ENCODE measurements at regions of chr10 and their contacts with region 1.

Region 1: DNA sequence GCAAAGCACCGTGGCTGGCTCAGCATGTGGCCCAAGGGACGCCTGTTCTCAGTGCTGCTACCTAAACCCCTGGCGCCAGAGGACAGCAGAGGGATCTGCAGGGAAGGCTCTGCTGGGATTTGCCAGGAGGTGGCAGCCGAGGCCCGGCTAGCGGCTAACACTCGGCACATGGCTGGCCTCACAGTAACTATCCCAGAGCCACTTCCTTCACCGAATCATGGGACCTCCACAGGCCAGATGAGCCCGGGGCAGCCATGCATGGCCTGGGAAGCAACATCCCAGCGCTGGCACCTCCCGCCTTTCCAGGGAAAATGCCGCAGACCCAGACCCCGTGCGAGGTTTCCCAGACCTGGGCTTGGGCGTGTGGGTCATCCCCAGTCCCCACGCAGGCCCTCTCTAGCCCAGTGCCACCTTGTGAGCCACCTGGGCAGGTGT is 36.4 kb downstream of the DPYSL4 start:
- DNase-seq: peak; percentile 17
- H3K4me3 ChIP-seq: no peak overlapping the region
- H3K27ac ChIP-seq: no peak overlapping the region
- H3K4me1 ChIP-seq: no peaks in the 10 kb centered on the region
- CTCF ChIP-seq: peak; percentile 37; the same call in 1 of the 2 replicates

Region 2: GRCh38 chr10:132351611-132352010 is 128.4 kb after region 1 on chr10:
- CTCF ChIA-PET with region 1: no interaction called
- POLR2A ChIA-PET with region 1: no interaction called
- intact Hi-C with region 1: loop called (anchors 1 kb)
- DNase-seq: peak; percentile 25
- H3K4me3 ChIP-seq: no peak overlapping the region
- H3K27ac ChIP-seq: no peak overlapping the region
- H3K4me1 ChIP-seq: peaks cover 9% of the 10 kb centered on the region
- CTCF ChIP-seq: no peak

Region 3: DNA sequence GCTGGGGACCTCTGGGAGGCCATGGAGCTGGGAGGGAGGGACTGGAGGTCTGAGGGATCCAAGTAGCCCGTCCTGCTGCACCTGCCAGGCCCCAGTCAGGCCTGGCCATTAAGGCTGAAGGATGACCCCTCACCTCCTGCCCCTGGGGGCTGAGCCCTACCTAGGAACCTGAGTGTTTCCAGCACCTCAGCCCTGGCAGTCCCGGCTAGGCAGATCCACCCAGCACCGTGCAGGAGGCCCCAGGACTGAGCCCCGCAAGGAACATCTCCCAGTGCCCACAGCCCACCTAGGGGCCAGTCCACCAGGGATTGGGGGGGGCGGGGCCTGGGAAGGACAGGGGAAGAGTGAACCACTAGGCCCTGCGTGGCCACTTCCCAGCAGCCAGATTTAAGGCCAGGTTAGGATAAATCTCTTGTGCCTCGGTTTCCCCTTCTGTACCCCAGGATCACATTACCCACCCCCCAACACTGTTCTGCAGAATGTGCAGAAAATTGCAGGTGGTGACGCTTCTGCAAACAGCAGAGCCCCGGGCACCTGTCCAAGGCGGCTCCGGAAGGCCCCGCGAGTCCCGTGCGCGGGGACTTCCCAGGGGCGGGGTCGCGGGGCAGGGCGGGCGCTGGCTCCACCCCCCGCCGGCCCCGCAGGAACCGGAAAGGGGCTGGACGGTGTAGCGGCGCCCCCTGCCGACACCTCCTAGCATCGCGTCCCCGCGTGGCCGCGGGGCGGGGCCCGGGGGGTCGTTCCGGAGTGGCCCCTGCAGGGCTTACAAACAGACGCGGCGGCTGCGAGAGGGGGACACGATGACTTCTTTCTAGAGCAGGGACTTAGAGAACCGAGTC is 229.7 kb after region 1 on chr10:
- CTCF ChIA-PET with region 1: no interaction called
- POLR2A ChIA-PET with region 1: no interaction called
- intact Hi-C with region 1: loop called (anchors 10 kb)
- DNase-seq: peak; percentile 91
- H3K4me3 ChIP-seq: peak overlapping the region; percentile 35
- H3K27ac ChIP-seq: peak overlapping the region; percentile 10
- H3K4me1 ChIP-seq: peaks cover 26% of the 10 kb centered on the region
- CTCF ChIP-seq: peak; percentile 93